Mammary epithelial cell (primary cell): ENCODE measurements at regions of chr3 and their contacts with region 1.

Region 1: DNA sequence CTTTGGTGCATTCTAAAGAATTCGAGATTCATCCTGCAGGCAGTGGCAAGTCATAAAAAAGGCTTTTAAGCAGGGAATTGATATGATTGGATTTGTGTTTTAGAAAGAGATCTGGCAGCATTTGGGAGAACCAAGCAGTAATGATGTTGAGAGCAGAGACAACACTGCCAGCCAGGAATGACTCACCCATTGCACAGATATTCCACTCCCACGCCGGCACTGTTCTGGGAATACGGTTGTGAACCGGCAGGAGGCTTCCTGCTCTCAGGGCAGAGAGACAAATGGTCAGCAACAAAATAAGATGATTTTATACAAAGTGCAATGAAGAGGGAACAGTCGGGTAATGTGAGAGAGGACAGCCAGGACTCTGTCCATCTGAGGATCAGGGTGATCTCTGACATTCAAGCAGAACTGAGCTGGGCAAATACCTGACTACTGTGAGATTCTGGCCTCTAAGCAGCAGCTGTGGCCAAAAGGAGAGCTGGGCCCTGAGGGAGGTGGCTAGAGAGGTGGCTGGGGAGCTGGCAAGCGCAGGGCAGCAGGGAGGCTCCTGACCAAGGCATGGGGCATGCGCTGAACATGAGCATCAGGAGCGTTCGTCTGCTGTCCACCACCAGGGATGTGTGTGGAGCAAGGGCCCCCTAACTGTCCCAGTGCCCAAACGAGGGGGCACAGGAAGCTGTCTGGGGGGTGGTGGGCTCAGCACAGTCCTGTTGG is 56.1 kb upstream of the PLXNA1 start:
- DNase-seq: peak; percentile 68
- H3K4me3 ChIP-seq: no peak overlapping the region
- H3K27ac ChIP-seq: no peak overlapping the region
- H3K4me1 ChIP-seq: peaks cover 21% of the 10 kb centered on the region
- H3K27me3 ChIP-seq: no peaks in the 10 kb centered on the region
- CTCF ChIP-seq: peak; percentile 35 to 47

Region 2: DNA sequence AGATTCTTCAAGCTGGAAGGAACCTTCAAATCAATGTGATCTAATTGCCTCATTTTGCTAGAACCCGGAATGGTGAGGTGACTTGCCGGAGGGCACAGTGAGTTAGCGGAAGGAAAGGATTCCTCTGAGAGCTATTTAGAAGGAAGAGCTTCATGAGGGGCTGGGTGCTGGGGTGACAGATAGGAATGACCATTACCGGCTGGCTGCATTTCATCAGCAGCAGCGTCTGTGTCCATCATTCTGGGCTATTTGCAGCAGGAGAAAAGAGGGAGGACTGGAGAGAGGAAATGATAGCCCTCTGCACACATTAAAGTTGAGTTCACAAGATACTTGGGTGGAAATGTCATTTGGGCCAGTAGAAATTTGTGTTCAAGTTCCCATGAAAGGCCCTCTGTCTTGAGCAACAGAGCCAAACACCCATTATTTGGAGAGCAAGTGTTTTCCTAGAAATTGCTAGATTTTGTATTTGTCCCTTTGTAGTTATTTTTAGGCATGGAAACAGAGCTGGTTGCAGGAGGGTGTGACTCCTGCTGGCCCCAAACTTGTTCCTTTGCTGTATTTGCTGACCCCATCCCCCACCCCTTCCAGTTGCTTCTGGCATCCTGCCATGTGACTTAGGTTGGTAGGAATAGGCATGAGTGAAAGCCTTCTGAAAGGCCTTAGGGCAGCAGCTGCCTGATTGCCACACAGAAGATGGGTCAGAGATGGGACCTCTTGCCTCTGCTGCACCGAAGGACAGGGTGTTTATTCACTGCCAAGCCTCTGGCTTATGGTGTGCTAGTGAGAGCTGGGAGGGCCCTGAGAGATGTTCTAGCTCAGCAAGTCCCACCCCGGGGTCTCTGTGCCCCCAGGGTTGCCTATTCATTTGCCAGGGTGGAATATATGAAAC is 31.4 kb before region 1 on chr3:
- CTCF ChIA-PET with region 1: no interaction called
- dilution Hi-C with region 1: no loop called
- in situ Hi-C with region 1: no loop called
- intact Hi-C with region 1: no loop called
- DNase-seq: peak; percentile 59
- H3K4me3 ChIP-seq: no peak overlapping the region
- H3K27ac ChIP-seq: no peak overlapping the region
- H3K4me1 ChIP-seq: peaks cover 32% of the 10 kb centered on the region
- H3K27me3 ChIP-seq: no peaks in the 10 kb centered on the region
- CTCF ChIP-seq: no peak

Region 3: DNA sequence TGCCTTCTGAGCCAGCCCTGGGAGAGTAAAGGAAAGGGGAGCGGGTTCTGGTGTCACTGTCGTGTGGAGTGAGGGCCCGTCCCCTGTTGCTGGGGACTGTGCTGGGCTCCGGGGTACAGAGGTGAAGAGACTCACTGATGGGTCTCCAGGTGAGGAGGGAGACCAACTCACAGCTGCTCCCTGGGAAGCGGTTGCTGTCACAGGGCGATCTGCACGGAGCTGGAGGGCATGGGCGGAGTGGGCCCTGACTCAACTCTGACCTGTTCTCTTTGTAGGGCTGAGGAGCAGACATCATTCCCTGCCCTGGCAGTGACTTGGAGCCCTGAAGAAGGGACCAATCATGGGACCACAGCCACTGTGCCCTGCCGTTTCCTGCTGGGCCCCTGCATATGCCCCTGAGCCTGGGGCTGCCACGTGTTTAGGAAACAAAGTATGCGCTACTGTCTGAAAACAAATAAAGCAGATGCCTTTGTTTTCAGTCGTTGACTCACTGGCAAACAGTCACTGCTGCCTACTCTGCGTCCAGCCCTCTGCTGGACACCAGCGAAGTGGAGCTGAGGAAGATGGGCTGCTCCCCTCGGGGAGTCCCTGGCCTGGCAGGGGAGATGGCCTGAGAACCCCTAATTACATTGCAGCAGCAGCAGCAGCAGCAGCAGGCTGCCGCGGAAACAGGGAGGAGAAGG is 33.2 kb after region 1 on chr3:
- CTCF ChIA-PET with region 1: no interaction called
- dilution Hi-C with region 1: no loop called
- in situ Hi-C with region 1: no loop called
- intact Hi-C with region 1: no loop called
- DNase-seq: peak; percentile 64
- H3K4me3 ChIP-seq: no peak overlapping the region
- H3K27ac ChIP-seq: no peak overlapping the region
- H3K4me1 ChIP-seq: peaks cover 40% of the 10 kb centered on the region
- H3K27me3 ChIP-seq: no peaks in the 10 kb centered on the region
- CTCF ChIP-seq: peak; percentile 16 to 49

Region 4: DNA sequence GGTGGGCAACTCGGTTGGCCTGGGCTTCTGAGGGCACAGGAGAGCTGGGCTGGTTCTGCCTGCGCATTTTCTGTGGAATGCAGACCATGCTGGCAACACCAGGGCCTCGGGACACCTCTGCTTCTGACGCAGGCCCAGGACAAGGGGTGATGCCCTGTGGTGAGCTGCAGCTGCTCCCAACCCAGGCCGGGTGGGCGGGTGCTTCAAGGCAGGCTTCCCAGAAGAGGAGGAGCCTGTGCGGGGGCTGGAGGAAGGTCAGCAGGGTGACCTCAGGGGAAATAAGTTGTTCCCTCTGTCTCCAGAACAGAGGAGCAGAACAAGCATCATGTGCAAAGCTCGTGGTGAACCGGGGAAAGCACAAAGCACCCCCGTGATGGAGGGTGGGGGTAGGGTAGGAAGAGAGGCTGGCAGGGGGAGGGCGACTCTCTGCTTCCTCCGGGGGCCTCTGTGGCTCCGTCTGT is 45.1 kb after region 1 on chr3:
- CTCF ChIA-PET with region 1: no interaction called
- dilution Hi-C with region 1: loop called (anchors 10 kb)
- in situ Hi-C with region 1: no loop called
- intact Hi-C with region 1: no loop called
- DNase-seq: no peak
- H3K4me3 ChIP-seq: no peak overlapping the region
- H3K27ac ChIP-seq: no peak overlapping the region
- H3K4me1 ChIP-seq: peaks cover 5% of the 10 kb centered on the region
- H3K27me3 ChIP-seq: no peaks in the 10 kb centered on the region
- CTCF ChIP-seq: no peak